CD14-positive monocyte (primary cell): ENCODE measurements at regions of chr21 and their contacts with region 1.

Region 1: DNA sequence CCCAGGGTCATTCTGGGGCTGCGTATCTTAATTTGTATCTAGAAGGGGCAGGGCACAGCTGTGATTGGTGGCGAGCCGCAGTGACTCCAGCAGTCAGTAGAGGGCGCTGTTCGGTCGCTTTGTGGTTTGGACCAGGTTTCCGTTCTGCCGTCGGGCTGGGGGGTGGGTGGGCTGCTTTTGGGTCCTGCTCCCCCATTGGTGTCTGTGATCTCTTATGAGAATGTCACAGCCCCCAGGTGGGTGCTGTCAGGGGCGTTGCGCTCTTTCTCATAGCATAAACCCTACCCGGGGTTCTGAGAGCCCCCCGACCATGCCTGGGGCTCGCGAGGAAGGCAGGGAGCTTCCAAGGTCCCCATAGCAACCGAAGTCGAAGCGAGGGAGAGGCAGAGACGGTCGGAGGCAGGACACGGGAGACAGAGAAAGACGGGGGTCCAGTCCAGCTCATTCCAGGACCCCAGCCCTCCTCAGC is 5.4 kb downstream of the TFF3 start:
- DNase-seq: peak; percentile 38 to 60 (median 59)
- H3K4me3 ChIP-seq: no peak overlapping the region
- H3K4me3 Mint-ChIP-seq: no peak overlapping the region
- H3K27ac ChIP-seq: no peak overlapping the region
- H3K27ac Mint-ChIP-seq: no peak overlapping the region
- H3K4me1 ChIP-seq: peaks cover 24 to 28% of the 10 kb centered on the region in 2 donors
- H3K4me1 Mint-ChIP-seq: peaks cover 31% of the 10 kb centered on the region
- H3K27me3 ChIP-seq: no peaks in the 10 kb centered on the region
- H3K27me3 Mint-ChIP-seq: peaks cover 6 to 11% (median 8%) of the 10 kb centered on the region in 3 donors
- CTCF ChIP-seq: peak; percentile 88

Region 2: GRCh38 chr21:42350896-42351543 is 41.2 kb after region 1 on chr21 and contains the start of gene TFF2:
- intact Hi-C with region 1: no loop called
- DNase-seq: no peak
- H3K4me3 ChIP-seq: no peak within 1 kb of the TSS
- H3K4me3 Mint-ChIP-seq: no peak within 1 kb of the TSS
- H3K27ac ChIP-seq: no peak within 1 kb of the TSS
- H3K27ac Mint-ChIP-seq: no peak within 1 kb of the TSS
- H3K4me1 ChIP-seq: no peaks in the 10 kb centered on the region
- H3K4me1 Mint-ChIP-seq: no peaks in the 10 kb centered on the region
- H3K27me3 ChIP-seq: no peaks in the 10 kb centered on the region
- H3K27me3 Mint-ChIP-seq: peaks cover 0 to 5% (median 3%) of the 10 kb centered on the region in 3 donors
- CTCF ChIP-seq: no peak
- polyA plus RNA-seq, gene TFF2: not detected

Region 3: DNA sequence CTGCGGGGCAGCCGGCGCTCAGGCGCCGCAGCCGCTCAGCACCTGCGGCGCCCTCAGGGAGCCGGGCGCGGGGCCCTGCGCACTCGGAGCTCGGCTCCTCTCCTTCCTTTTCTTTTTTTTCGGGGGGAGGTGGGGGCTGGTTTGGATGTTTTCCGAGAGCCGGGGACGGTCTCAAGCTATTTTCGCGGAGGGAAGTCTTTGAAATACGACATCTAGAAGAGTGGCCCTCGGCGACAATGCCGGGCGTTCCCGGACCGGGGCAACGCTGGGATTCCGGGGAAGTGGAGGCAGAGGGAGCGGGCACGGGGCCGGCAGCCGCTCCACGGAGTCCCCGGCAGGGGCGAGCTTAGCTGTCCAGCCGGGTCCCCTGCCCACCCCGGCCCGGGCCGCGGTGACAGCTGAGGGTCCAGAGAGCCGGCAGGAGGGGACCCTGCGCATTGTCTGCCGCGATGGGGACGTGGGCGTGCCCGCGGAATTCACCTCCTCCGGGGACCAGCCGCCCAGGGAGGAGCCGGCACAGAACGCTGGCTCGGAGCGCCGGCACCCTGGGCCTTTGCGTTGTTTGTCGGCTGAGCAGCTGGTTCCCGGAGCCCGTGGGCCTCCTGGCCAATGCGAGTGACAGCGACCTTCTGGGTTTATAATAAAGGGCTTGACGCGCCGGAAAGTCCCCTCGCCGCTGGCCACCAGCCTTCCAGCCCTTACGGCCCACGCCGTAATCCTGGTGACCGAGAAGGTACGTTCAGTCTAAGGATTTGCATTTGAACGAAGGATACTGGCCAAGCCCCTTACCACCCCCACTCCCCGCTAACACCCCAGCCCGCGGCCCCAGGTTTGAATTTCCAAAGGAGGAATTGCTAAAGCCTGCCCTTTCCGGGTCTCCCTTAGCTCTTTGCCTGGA is 204.4 kb after region 1 on chr21:
- intact Hi-C with region 1: no loop called
- DNase-seq: peak; percentile 30 to 54 (median 46)
- H3K4me3 ChIP-seq: peak overlapping the region; percentile 74 to 90 (median 78)
- H3K4me3 Mint-ChIP-seq: peak overlapping the region; percentile 92 to 97
- H3K27ac ChIP-seq: peak overlapping the region in 1 of 2 donors; percentile 79
- H3K27ac Mint-ChIP-seq: peak overlapping the region; percentile 56 to 88 (median 76)
- H3K4me1 ChIP-seq: peaks cover 15 to 25% of the 10 kb centered on the region in 2 donors
- H3K4me1 Mint-ChIP-seq: peaks cover 21% of the 10 kb centered on the region
- H3K27me3 ChIP-seq: no peaks in the 10 kb centered on the region
- H3K27me3 Mint-ChIP-seq: no peaks in the 10 kb centered on the region
- CTCF ChIP-seq: no peak

Region 4: GRCh38 chr21:42524349-42525151 is 214.8 kb after region 1 on chr21:
- intact Hi-C with region 1: loop called in 1 of 2 experiments (anchors 10 kb)
- DNase-seq: peak; percentile 6 to 25 (median 23)
- H3K4me3 ChIP-seq: peak overlapping the region in 1 of 3 experiments; percentile 4
- H3K4me3 Mint-ChIP-seq: peak overlapping the region; percentile 47 to 59
- H3K27ac ChIP-seq: peak overlapping the region in 1 of 2 donors; percentile 6
- H3K27ac Mint-ChIP-seq: peak overlapping the region; percentile 21 to 86 (median 65)
- H3K4me1 ChIP-seq: peaks cover 26 to 29% of the 10 kb centered on the region in 2 donors
- H3K4me1 Mint-ChIP-seq: peaks cover 33% of the 10 kb centered on the region
- H3K27me3 ChIP-seq: no peaks in the 10 kb centered on the region
- H3K27me3 Mint-ChIP-seq: peaks cover 0 to 3% (median 2%) of the 10 kb centered on the region in 3 donors
- CTCF ChIP-seq: no peak